CD8-positive, alpha-beta T cell (primary cell): ENCODE measurements at regions of chr2 and their contacts with region 1.

Region 1: GRCh38 chr2:162123806-162124758 is 28.0 kb downstream of the GCG start:
- DNase-seq: peak in 3 of 9 experiments; percentile 22 to 77 (median 72)
- ATAC-seq: peak; percentile 71
- H3K4me3 ChIP-seq: no peak overlapping the region
- H3K4me3 Mint-ChIP-seq: no peak overlapping the region
- H3K27ac ChIP-seq: no peak overlapping the region
- H3K27ac Mint-ChIP-seq: no peak overlapping the region
- H3K4me1 ChIP-seq: no peaks in the 10 kb centered on the region
- H3K4me1 Mint-ChIP-seq: no peaks in the 10 kb centered on the region
- H3K27me3 ChIP-seq: no peaks in the 10 kb centered on the region
- H3K27me3 Mint-ChIP-seq: no peaks in the 10 kb centered on the region
- CTCF ChIP-seq: peak; percentile 96

Region 2: DNA sequence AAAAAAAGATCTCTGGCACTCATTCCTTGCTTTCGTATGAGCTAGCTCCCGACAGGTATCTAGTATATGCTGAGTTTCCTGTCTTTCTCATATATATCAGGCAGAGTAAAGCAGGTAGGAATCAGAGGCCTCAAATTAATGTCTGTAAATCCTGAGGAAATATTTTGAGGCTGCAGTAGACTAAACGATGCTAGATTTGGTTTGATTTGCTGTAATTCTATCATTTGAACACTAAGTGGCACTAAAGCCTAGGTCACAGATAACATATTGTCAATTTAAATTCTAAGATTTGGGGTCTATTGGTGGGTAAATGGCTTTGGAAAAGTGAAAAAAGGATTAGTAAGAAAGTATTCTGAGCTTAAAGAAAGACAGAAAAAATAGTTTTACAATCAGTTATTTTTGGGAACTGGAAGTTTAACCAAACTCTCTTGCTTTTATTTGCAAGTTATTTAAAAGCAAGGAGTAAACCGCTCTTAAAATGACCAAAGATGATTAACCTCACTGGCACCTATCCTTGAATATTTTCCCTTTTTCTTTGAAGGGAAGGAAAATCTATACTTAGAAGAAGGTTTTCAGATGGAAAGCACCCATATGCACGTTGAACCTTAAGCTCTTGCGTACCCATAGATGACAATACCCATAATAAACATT is 537.4 kb before region 1 on chr2:
- CTCF ChIA-PET with region 1: interaction called, 40 read pairs
- POLR2A ChIA-PET with region 1: interaction called, 4 read pairs
- intact Hi-C with region 1: loop called (anchors 1 kb)
- DNase-seq: peak in 2 of 9 experiments; percentile 30 to 42
- ATAC-seq: peak; percentile 38
- H3K4me3 ChIP-seq: no peak overlapping the region
- H3K4me3 Mint-ChIP-seq: no peak overlapping the region
- H3K27ac ChIP-seq: no peak overlapping the region
- H3K27ac Mint-ChIP-seq: no peak overlapping the region
- H3K4me1 ChIP-seq: no peaks in the 10 kb centered on the region
- H3K4me1 Mint-ChIP-seq: no peaks in the 10 kb centered on the region
- H3K27me3 ChIP-seq: no peaks in the 10 kb centered on the region
- H3K27me3 Mint-ChIP-seq: no peaks in the 10 kb centered on the region
- CTCF ChIP-seq: peak; percentile 81

Region 3: GRCh38 chr2:161946489-161947107 is 177.5 kb before region 1 on chr2:
- CTCF ChIA-PET with region 1: interaction called, 13 read pairs
- POLR2A ChIA-PET with region 1: interaction called, 4 read pairs
- intact Hi-C with region 1: loop called in 1 of 2 experiments (anchors 2 kb)
- DNase-seq: peak in 2 of 9 experiments; percentile 35 to 38
- ATAC-seq: no peak
- H3K4me3 ChIP-seq: no peak overlapping the region
- H3K4me3 Mint-ChIP-seq: no peak overlapping the region
- H3K27ac ChIP-seq: no peak overlapping the region
- H3K27ac Mint-ChIP-seq: no peak overlapping the region
- H3K4me1 ChIP-seq: no peaks in the 10 kb centered on the region
- H3K4me1 Mint-ChIP-seq: peaks cover 3% of the 10 kb centered on the region
- H3K27me3 ChIP-seq: no peaks in the 10 kb centered on the region
- H3K27me3 Mint-ChIP-seq: no peaks in the 10 kb centered on the region
- CTCF ChIP-seq: peak; percentile 66

Region 4: GRCh38 chr2:162007447-162008040 is 116.5 kb before region 1 on chr2:
- CTCF ChIA-PET with region 1: interaction called, 10 read pairs
- POLR2A ChIA-PET with region 1: interaction called, 3 read pairs
- intact Hi-C with region 1: loop called (anchors 1 to 2 kb)
- DNase-seq: peak in 2 of 9 experiments; percentile 41 to 52
- ATAC-seq: no peak
- H3K4me3 ChIP-seq: no peak overlapping the region
- H3K4me3 Mint-ChIP-seq: no peak overlapping the region
- H3K27ac ChIP-seq: no peak overlapping the region
- H3K27ac Mint-ChIP-seq: no peak overlapping the region
- H3K4me1 ChIP-seq: peaks cover 27% of the 10 kb centered on the region
- H3K4me1 Mint-ChIP-seq: peaks cover 44% of the 10 kb centered on the region
- H3K27me3 ChIP-seq: no peaks in the 10 kb centered on the region
- H3K27me3 Mint-ChIP-seq: no peaks in the 10 kb centered on the region
- CTCF ChIP-seq: peak; percentile 98